A673 (cell line): ENCODE measurements at regions of chr9 and their contacts with region 1.

Region 1: GRCh38 chr9:129482521-129483414 is 138.1 kb downstream of the C9orf50 start:
- DNase-seq: peak; percentile 90
- H3K4me3 ChIP-seq: peak overlapping the region; percentile 54
- H3K27ac ChIP-seq: peak overlapping the region; percentile 96
- H3K4me1 ChIP-seq: peaks cover 44% of the 10 kb centered on the region
- H3K27me3 ChIP-seq: no peaks in the 10 kb centered on the region
- CTCF ChIP-seq: no peak

Region 2: GRCh38 chr9:129333953-129334724 is 148.6 kb before region 1 on chr9:
- CTCF ChIA-PET with region 1: no interaction called
- POLR2A ChIA-PET with region 1: no interaction called
- intact Hi-C with region 1: loop called (anchors 5 kb)
- DNase-seq: peak; percentile 88
- H3K4me3 ChIP-seq: peak overlapping the region; percentile 10
- H3K27ac ChIP-seq: peak overlapping the region; percentile 85
- H3K4me1 ChIP-seq: peaks cover 44% of the 10 kb centered on the region
- H3K27me3 ChIP-seq: no peaks in the 10 kb centered on the region
- CTCF ChIP-seq: no peak